ENCODE measurements at regions of chr7 and their contacts with region 1.

Region 1: GRCh38 chr7:131107337-131108211 is 220.1 kb upstream of the MKLN1 start:
- DNase-seq: peak; percentile 94
- H3K4me3 Mint-ChIP-seq: peak overlapping the region; percentile 94
- H3K27ac Mint-ChIP-seq: peak overlapping the region; percentile 99
- H3K4me1 Mint-ChIP-seq: peaks cover 65% of the 10 kb centered on the region
- H3K27me3 Mint-ChIP-seq: peaks cover 2% of the 10 kb centered on the region

Region 2: GRCh38 chr7:130182990-130183389 is 924.6 kb before region 1 on chr7:
- intact Hi-C with region 1: loop called (anchors 5 kb)
- DNase-seq: no peak
- H3K4me3 Mint-ChIP-seq: no peak overlapping the region
- H3K27ac Mint-ChIP-seq: peak overlapping the region; percentile 78
- H3K4me1 Mint-ChIP-seq: peaks cover 20% of the 10 kb centered on the region
- H3K27me3 Mint-ChIP-seq: no peaks in the 10 kb centered on the region

Region 3: DNA sequence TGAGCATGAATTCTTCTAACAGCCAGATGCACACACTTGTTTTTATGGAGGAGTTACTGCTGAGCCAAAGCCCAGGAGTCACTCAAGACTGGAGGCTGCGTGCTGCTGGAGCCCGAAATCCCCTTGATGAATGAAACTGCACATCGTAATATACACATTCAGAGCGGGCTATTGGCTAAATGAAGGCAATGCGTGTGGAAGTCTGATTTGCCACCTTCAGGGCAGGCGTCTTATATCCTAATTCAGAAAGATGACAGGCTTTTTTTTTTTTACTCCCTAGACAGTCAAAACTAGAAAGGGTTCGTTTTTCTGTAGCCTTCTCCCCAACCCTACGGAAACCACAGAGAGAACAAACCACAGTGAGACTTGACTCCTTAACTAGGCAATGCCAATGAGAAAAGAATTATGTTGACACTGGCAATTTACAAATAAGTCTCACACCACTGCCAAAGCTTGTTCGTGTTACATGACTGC is 146.4 kb before region 1 on chr7:
- intact Hi-C with region 1: loop called (anchors 2 kb)
- DNase-seq: peak; percentile 96
- H3K4me3 Mint-ChIP-seq: peak overlapping the region; percentile 88
- H3K27ac Mint-ChIP-seq: peak overlapping the region; percentile 97
- H3K4me1 Mint-ChIP-seq: peaks cover 36% of the 10 kb centered on the region
- H3K27me3 Mint-ChIP-seq: no peaks in the 10 kb centered on the region

Region 4: GRCh38 chr7:131090886-131091692 is 16.5 kb before region 1 on chr7:
- intact Hi-C with region 1: no loop called
- DNase-seq: no peak
- H3K4me3 Mint-ChIP-seq: no peak overlapping the region
- H3K27ac Mint-ChIP-seq: no peak overlapping the region
- H3K4me1 Mint-ChIP-seq: peaks cover 11% of the 10 kb centered on the region
- H3K27me3 Mint-ChIP-seq: no peaks in the 10 kb centered on the region

Region 5: GRCh38 chr7:131188367-131189339 is 81.1 kb after region 1 on chr7:
- intact Hi-C with region 1: loop called (anchors 1 kb)
- DNase-seq: peak; percentile 89
- H3K4me3 Mint-ChIP-seq: peak overlapping the region; percentile 38
- H3K27ac Mint-ChIP-seq: peak overlapping the region; percentile 90
- H3K4me1 Mint-ChIP-seq: peaks cover 47% of the 10 kb centered on the region
- H3K27me3 Mint-ChIP-seq: no peaks in the 10 kb centered on the region

Region 6: GRCh38 chr7:131370523-131370968 is 263.0 kb after region 1 on chr7:
- intact Hi-C with region 1: loop called (anchors 5 kb)
- DNase-seq: peak; percentile 82
- H3K4me3 Mint-ChIP-seq: no peak overlapping the region
- H3K27ac Mint-ChIP-seq: no peak overlapping the region
- H3K4me1 Mint-ChIP-seq: peaks cover 41% of the 10 kb centered on the region
- H3K27me3 Mint-ChIP-seq: no peaks in the 10 kb centered on the region